Endothelial cell of umbilical vein (primary cell): ENCODE measurements at regions of chr1 and their contacts with region 1.

Region 1: GRCh38 chr1:13662493-13662892 is 37.5 kb upstream of the PRDM2 start:
- DNase-seq: no peak
- H3K4me3 ChIP-seq: no peak overlapping the region
- H3K27ac ChIP-seq: no peak overlapping the region
- H3K4me1 ChIP-seq: no peaks in the 10 kb centered on the region
- H3K27me3 ChIP-seq: no peaks in the 10 kb centered on the region
- CTCF ChIP-seq: no peak
- POLR2A ChIP-seq: no peak

Region 2: GRCh38 chr1:13628711-13629110 is 33.8 kb before region 1 on chr1:
- CTCF ChIA-PET with region 1: no interaction called
- POLR2A ChIA-PET with region 1: no interaction called
- dilution Hi-C with region 1: no loop called
- intact Hi-C with region 1: no loop called
- DNase-seq: no peak
- H3K4me3 ChIP-seq: no peak overlapping the region
- H3K27ac ChIP-seq: no peak overlapping the region
- H3K4me1 ChIP-seq: no peaks in the 10 kb centered on the region
- H3K27me3 ChIP-seq: no peaks in the 10 kb centered on the region
- CTCF ChIP-seq: no peak
- POLR2A ChIP-seq: no peak

Region 3: DNA sequence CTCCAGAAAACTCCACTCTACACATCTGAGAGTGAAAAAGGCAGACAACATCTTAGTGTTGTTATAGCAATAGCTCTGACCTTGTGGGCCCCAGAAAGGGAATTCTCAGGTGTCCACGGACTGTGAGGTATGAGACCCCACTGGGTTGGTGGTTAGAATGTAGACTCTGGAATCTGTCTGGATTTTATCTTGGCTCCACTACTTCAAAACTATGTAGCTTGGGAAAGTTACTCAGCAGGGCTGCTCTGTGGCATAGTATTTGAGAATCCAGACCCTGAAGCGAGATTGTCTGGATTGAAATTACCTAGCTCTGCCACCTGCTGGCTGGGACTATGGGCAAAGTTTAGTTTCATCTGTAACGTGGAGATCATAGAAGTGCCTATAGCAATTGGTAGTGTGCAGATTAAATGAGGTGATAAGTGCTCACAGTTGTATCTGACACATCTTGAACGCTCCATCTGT is 63.3 kb after region 1 on chr1:
- CTCF ChIA-PET with region 1: interaction called, 10 read pairs
- POLR2A ChIA-PET with region 1: no interaction called
- dilution Hi-C with region 1: no loop called
- intact Hi-C with region 1: loop called (anchors 1 kb)
- DNase-seq: peak; percentile 33
- H3K4me3 ChIP-seq: no peak overlapping the region
- H3K27ac ChIP-seq: no peak overlapping the region
- H3K4me1 ChIP-seq: peaks cover 2% of the 10 kb centered on the region
- H3K27me3 ChIP-seq: no peaks in the 10 kb centered on the region
- CTCF ChIP-seq: peak in 1 of 2 donors; percentile 44
- POLR2A ChIP-seq: no peak

Region 4: GRCh38 chr1:13775459-13775858 is 113.0 kb after region 1 on chr1:
- CTCF ChIA-PET with region 1: no interaction called
- POLR2A ChIA-PET with region 1: no interaction called
- dilution Hi-C with region 1: no loop called
- intact Hi-C with region 1: no loop called
- DNase-seq: no peak
- H3K4me3 ChIP-seq: no peak overlapping the region
- H3K27ac ChIP-seq: no peak overlapping the region
- H3K4me1 ChIP-seq: no peaks in the 10 kb centered on the region
- H3K27me3 ChIP-seq: no peaks in the 10 kb centered on the region
- CTCF ChIP-seq: no peak
- POLR2A ChIP-seq: no peak

Region 5: DNA sequence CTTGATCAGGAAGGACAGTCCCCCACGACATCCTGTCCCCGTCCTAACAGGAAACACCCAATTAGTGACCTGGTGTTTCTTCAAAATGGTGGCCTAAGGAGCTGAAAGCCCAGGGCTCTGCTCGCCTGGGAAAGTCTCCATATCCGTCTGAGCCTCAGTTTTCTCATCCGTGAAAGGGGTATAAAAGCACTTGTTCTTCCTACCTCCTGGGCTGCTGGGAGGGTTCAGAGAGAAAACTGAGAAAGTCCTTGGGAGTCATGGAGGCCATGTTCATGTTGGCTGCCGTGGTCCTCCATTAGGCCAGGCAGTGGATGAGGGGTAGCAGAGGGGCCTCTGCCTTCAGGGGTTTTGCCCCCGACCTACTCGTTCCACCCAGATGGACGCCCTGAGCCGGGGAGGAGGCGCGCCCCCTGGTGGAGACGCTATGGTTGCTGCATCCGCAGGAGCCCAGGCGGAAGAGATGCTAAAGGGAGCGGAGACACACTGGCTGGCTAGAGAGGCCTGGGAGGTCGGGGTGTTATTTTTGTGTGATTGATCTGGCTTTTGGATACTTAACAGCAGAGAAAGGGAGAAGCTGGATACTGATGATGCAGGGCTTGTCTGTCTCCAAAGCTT is 151.0 kb after region 1 on chr1:
- CTCF ChIA-PET with region 1: interaction called, 3 read pairs
- POLR2A ChIA-PET with region 1: no interaction called
- dilution Hi-C with region 1: no loop called
- intact Hi-C with region 1: loop called (anchors 1 kb)
- DNase-seq: peak; percentile 4
- H3K4me3 ChIP-seq: no peak overlapping the region
- H3K27ac ChIP-seq: no peak overlapping the region
- H3K4me1 ChIP-seq: no peaks in the 10 kb centered on the region
- H3K27me3 ChIP-seq: no peaks in the 10 kb centered on the region
- CTCF ChIP-seq: peak; percentile 58 to 66
- POLR2A ChIP-seq: no peak

Region 6: DNA sequence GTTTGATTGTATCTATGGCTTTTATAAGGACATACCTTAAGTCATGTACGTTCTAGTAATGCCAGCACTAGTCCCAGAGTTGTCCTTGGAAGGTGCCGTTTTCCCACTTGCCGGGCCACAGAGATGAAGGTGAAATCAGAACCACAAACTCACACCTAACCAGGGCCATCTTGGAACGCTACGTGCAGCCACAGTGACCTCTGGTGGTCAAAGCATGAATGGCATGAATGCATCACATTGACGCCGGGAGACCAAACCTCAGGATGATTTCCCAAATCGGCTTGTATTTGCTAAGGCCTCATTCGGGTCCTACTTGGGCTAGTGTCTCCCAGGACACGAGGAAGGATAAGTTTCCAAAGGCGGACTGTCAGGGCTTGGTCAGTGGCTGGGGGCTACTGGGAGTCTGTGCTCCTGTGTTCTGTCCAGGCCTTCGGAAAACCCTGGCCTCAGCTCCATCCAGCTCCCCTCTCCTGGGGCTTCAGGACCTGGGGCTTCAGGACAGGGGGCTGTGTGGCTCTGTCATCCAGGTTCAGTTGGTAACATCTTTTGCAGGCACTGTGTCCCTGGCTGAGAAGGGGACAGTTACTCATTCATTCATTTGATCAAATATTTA is 298.0 kb after region 1 on chr1:
- CTCF ChIA-PET with region 1: interaction called, 14 read pairs
- POLR2A ChIA-PET with region 1: no interaction called
- dilution Hi-C with region 1: no loop called
- intact Hi-C with region 1: no loop called
- DNase-seq: peak; percentile 43
- H3K4me3 ChIP-seq: no peak overlapping the region
- H3K27ac ChIP-seq: no peak overlapping the region
- H3K4me1 ChIP-seq: no peaks in the 10 kb centered on the region
- H3K27me3 ChIP-seq: no peaks in the 10 kb centered on the region
- CTCF ChIP-seq: peak; percentile 84 to 89
- POLR2A ChIP-seq: no peak